PC-3 (cell line): ENCODE measurements at regions of chr4 and their contacts with region 1.

Region 1: GRCh38 chr4:71713611-71714203 is 70.2 kb downstream of the GC start:
- DNase-seq: peak; percentile 79
- ATAC-seq: no peak; the same call in 1 of the 2 replicates
- H3K4me3 ChIP-seq: no peak overlapping the region
- H3K27ac ChIP-seq: no peak overlapping the region
- H3K4me1 ChIP-seq: peaks cover 19% of the 10 kb centered on the region; the same call in 1 of the 2 replicates
- H3K27me3 ChIP-seq: no peaks in the 10 kb centered on the region
- CTCF ChIP-seq: peak; percentile 91

Region 2: DNA sequence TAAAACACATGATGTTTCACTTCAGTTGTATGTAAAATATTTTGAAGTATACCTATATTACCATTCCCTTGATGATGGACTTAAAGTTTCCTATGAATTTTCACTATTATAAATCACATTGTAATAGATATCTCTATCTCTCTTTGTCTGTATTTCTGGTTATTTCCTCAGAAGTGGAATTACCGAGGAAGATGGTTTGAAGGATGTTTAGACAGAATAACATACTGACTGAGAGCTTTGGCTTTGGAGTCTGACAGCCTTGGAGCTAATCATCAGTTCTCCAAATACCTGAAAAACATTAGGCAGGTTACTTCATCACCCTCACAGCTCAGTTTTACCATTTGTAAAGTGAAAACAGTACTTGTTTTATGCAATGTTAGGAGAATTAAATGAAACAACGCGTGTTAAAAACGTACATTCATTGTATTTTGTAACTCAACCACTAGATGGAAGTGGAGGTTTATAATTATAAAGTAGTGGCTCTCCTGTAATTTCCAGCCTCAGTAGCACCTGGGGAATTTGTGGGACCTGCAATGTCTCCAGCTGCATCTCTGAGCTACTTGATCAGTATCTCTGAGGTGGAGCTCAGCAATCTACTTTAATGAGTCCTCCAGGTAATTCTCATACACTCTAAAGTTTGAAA is 1061.7 kb before region 1 on chr4:
- CTCF ChIA-PET with region 1: no interaction called
- POLR2A ChIA-PET with region 1: no interaction called
- intact Hi-C with region 1: loop called (anchors 5 kb)
- DNase-seq: peak; percentile 77
- ATAC-seq: peak; percentile 74
- H3K4me3 ChIP-seq: peak overlapping the region; percentile 48; the same call in 1 of the 2 replicates
- H3K27ac ChIP-seq: no peak overlapping the region
- H3K4me1 ChIP-seq: no peaks in the 10 kb centered on the region
- H3K27me3 ChIP-seq: no peaks in the 10 kb centered on the region
- CTCF ChIP-seq: peak; percentile 85

Region 3: GRCh38 chr4:71050809-71051208 is 662.9 kb before region 1 on chr4:
- CTCF ChIA-PET with region 1: interaction called, 4 read pairs
- POLR2A ChIA-PET with region 1: no interaction called
- intact Hi-C with region 1: loop called (anchors 5 kb)
- DNase-seq: peak; percentile 43
- ATAC-seq: peak; percentile 64; the same call in 1 of the 2 replicates
- H3K4me3 ChIP-seq: no peak overlapping the region
- H3K27ac ChIP-seq: no peak overlapping the region
- H3K4me1 ChIP-seq: no peaks in the 10 kb centered on the region
- H3K27me3 ChIP-seq: no peaks in the 10 kb centered on the region
- CTCF ChIP-seq: peak; percentile 29; the same call in 1 of the 2 replicates

Region 4: DNA sequence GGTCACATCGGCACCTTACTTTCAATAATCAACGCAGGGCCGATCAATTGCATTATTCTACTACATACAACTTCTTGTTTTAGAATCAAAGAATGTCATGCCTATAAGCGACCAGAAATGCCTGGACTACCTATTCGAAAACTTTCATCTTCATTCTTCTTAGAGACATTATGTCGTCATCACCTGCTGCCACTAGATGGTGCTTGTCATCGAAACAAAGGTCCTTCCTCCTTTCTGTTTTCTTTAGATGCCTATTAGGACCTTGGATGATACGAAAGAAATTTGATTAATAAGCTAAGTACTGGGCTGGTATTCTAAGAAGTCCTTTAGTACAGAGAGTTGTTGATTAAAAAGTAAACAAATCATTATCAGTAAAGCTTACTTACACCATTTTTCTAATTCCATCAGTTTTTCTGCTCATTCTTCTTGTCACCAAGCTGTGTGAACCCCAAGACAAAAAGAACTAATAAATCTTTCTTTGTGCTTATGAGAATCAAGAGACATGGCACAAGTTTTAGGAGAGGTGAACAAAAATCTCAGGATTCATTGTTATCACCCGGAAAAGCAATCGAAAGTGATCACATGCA is 529.4 kb before region 1 on chr4:
- CTCF ChIA-PET with region 1: interaction called, 4 read pairs
- POLR2A ChIA-PET with region 1: no interaction called
- intact Hi-C with region 1: loop called (anchors 1 kb)
- DNase-seq: peak; percentile 80
- ATAC-seq: peak; percentile 10; the same call in 1 of the 2 replicates
- H3K4me3 ChIP-seq: no peak overlapping the region
- H3K27ac ChIP-seq: no peak overlapping the region
- H3K4me1 ChIP-seq: peaks cover 21% of the 10 kb centered on the region
- H3K27me3 ChIP-seq: peaks cover 16% of the 10 kb centered on the region
- CTCF ChIP-seq: peak; percentile 95

Region 5: GRCh38 chr4:71270901-71271300 is 442.8 kb before region 1 on chr4:
- CTCF ChIA-PET with region 1: interaction called, 5 read pairs
- POLR2A ChIA-PET with region 1: no interaction called
- intact Hi-C with region 1: loop called (anchors 1 kb)
- DNase-seq: peak; percentile 73
- ATAC-seq: peak; percentile 91
- H3K4me3 ChIP-seq: no peak overlapping the region
- H3K27ac ChIP-seq: no peak overlapping the region
- H3K4me1 ChIP-seq: no peaks in the 10 kb centered on the region; the same call in 1 of the 2 replicates
- H3K27me3 ChIP-seq: no peaks in the 10 kb centered on the region
- CTCF ChIP-seq: peak; percentile 81

Region 6: GRCh38 chr4:71553605-71554004 is 160.1 kb before region 1 on chr4:
- CTCF ChIA-PET with region 1: interaction called, 4 read pairs
- POLR2A ChIA-PET with region 1: no interaction called
- intact Hi-C with region 1: loop called (anchors 1 kb)
- DNase-seq: peak; percentile 64
- ATAC-seq: peak; percentile 70
- H3K4me3 ChIP-seq: no peak overlapping the region
- H3K27ac ChIP-seq: no peak overlapping the region
- H3K4me1 ChIP-seq: peaks cover 23% of the 10 kb centered on the region
- H3K27me3 ChIP-seq: no peaks in the 10 kb centered on the region
- CTCF ChIP-seq: peak; percentile 84

Region 7: GRCh38 chr4:71607784-71608682 is 105.7 kb before region 1 on chr4:
- CTCF ChIA-PET with region 1: no interaction called
- POLR2A ChIA-PET with region 1: no interaction called
- intact Hi-C with region 1: loop called (anchors 1 kb)
- DNase-seq: peak; percentile 99
- ATAC-seq: peak; percentile 89
- H3K4me3 ChIP-seq: peak overlapping the region; percentile 32; the same call in 1 of the 2 replicates
- H3K27ac ChIP-seq: peak overlapping the region; percentile 90
- H3K4me1 ChIP-seq: peaks cover 45% of the 10 kb centered on the region
- H3K27me3 ChIP-seq: no peaks in the 10 kb centered on the region
- CTCF ChIP-seq: no peak

Region 8: DNA sequence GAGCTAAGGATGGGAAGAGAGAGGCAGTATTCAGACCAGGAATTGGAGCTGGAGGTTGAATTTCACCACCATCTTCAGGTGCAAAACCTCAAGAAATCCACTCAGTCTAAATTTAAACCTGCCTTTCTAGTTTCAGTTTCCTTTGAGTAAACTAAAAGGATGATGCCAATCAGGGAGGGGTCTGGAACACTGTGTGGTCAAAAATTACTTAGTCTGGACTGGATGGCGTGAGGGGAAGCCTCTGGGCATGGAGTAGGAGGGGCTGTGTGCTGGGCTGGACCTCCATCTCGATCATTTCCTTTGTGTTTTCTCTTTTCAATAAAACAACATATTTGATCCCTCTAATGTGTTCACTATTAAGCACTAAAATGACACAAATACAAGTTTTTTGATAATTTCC is 49.9 kb before region 1 on chr4:
- CTCF ChIA-PET with region 1: no interaction called
- POLR2A ChIA-PET with region 1: no interaction called
- intact Hi-C with region 1: no loop called
- DNase-seq: peak; percentile 25
- ATAC-seq: no peak
- H3K4me3 ChIP-seq: no peak overlapping the region
- H3K27ac ChIP-seq: no peak overlapping the region
- H3K4me1 ChIP-seq: peaks cover 4% of the 10 kb centered on the region; the same call in 1 of the 2 replicates
- H3K27me3 ChIP-seq: no peaks in the 10 kb centered on the region
- CTCF ChIP-seq: no peak